A549 (cell line): ENCODE measurements at regions of chr19 and their contacts with region 1.

Region 1: GRCh38 chr19:37899966-37900365 is 6.4 kb downstream of the WDR87 start:
- DNase-seq: no peak
- ATAC-seq: no peak
- H3K4me3 ChIP-seq: no peak overlapping the region
- H3K27ac ChIP-seq: no peak overlapping the region
- H3K4me1 ChIP-seq: no peaks in the 10 kb centered on the region
- CTCF ChIP-seq: no peak
- EP300 ChIP-seq: no peak
- POLR2A ChIP-seq: no peak
- RAD21 ChIP-seq: no peak

Region 2: DNA sequence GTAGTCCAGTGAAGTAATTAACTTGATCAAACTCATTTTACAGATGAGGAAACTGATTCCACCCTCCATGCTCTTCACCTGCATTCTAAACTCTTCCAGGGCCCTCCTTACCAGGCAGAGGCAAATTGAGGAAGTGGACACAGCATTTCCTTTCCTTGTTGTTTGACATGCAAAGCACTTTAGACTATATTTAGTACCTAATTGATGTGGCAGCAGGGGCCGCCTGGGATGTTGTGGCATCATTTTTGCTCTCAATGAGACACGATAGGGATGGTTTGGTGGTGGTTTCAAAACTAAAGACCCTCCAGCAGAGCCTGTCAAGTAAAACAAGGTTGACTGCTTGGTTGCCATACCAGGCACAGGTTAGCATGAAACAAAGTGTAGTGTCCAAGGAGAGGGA is 14.9 kb after region 1 on chr19:
- CTCF ChIA-PET with region 1: interaction called, 230 read pairs
- POLR2A ChIA-PET with region 1: no interaction called
- DNase-seq: no peak
- ATAC-seq: no peak
- H3K4me3 ChIP-seq: no peak overlapping the region
- H3K27ac ChIP-seq: no peak overlapping the region
- H3K4me1 ChIP-seq: peaks cover 6% of the 10 kb centered on the region; the same call in 2 of the 3 replicates
- CTCF ChIP-seq: no peak
- EP300 ChIP-seq: no peak
- POLR2A ChIP-seq: no peak
- RAD21 ChIP-seq: no peak

Region 3: GRCh38 chr19:38057959-38058710 is 158.2 kb after region 1 on chr19:
- CTCF ChIA-PET with region 1: interaction called, 316 read pairs
- POLR2A ChIA-PET with region 1: no interaction called
- DNase-seq: peak; percentile 54 to 60
- ATAC-seq: peak; percentile 27 to 70; a peak in 3 of 6 replicates
- H3K4me3 ChIP-seq: no peak overlapping the region
- H3K27ac ChIP-seq: peak overlapping the region; percentile 53 to 73; a peak in 5 of 6 replicates
- H3K4me1 ChIP-seq: peaks cover 31% of the 10 kb centered on the region
- CTCF ChIP-seq: no peak
- EP300 ChIP-seq: no peak
- POLR2A ChIP-seq: no peak
- RAD21 ChIP-seq: no peak

Region 4: GRCh38 chr19:38199340-38199739 is 299.4 kb after region 1 on chr19:
- CTCF ChIA-PET with region 1: interaction called, 24 read pairs
- POLR2A ChIA-PET with region 1: no interaction called
- DNase-seq: no peak
- ATAC-seq: no peak
- H3K4me3 ChIP-seq: no peak overlapping the region
- H3K27ac ChIP-seq: no peak overlapping the region
- H3K4me1 ChIP-seq: peaks cover 18% of the 10 kb centered on the region
- CTCF ChIP-seq: no peak
- EP300 ChIP-seq: no peak
- POLR2A ChIP-seq: no peak
- RAD21 ChIP-seq: no peak

Region 5: GRCh38 chr19:38224014-38224862 is 324.3 kb after region 1 on chr19 and contains the start of gene DPF1:
- CTCF ChIA-PET with region 1: interaction called, 187 read pairs
- POLR2A ChIA-PET with region 1: interaction called, 4 read pairs
- DNase-seq: peak; percentile 92 to 100
- ATAC-seq: peak; percentile 79 to 93
- H3K4me3 ChIP-seq: peak within 1 kb of the TSS; percentile 48
- H3K27ac ChIP-seq: peak within 1 kb of the TSS; percentile 34 to 80
- H3K4me1 ChIP-seq: peaks cover 24% of the 10 kb centered on the region
- CTCF ChIP-seq: peak; percentile 42
- EP300 ChIP-seq: no peak
- POLR2A ChIP-seq: peak; percentile 23; the same call in 1 of the 2 replicates
- RAD21 ChIP-seq: peak; percentile 37 to 48; a peak in 4 of 5 replicates
- polyA plus RNA-seq, gene DPF1: 1.3 and 2.1 TPM in 2 replicates

Region 6: GRCh38 chr19:38387550-38388348 is 487.8 kb after region 1 on chr19 and contains the start of gene GGN:
- CTCF ChIA-PET with region 1: interaction called, 17 read pairs
- POLR2A ChIA-PET with region 1: no interaction called
- DNase-seq: peak; percentile 98 to 100
- ATAC-seq: peak; percentile 53 to 78
- H3K4me3 ChIP-seq: peak within 1 kb of the TSS; percentile 61
- H3K27ac ChIP-seq: peak within 1 kb of the TSS; percentile 71 to 90
- H3K4me1 ChIP-seq: peaks cover 35% of the 10 kb centered on the region
- CTCF ChIP-seq: no peak
- EP300 ChIP-seq: no peak
- POLR2A ChIP-seq: no peak; the same call in 1 of the 2 replicates
- RAD21 ChIP-seq: no peak
- polyA plus RNA-seq, gene GGN: not detected in 2 replicates